Transverse colon (tissue), 4 donors: ENCODE measurements at regions of chr9 and their contacts with region 1.

Region 1: GRCh38 chr9:130780865-130781504 is 54.1 kb upstream of the ABL1 start:
- DNase-seq: peak; percentile 55
- H3K4me3 ChIP-seq: peak overlapping the region in 1 of 4 donors; percentile 24
- H3K27ac ChIP-seq: peak overlapping the region; percentile 82 to 95 (median 90)
- H3K4me1 ChIP-seq: peaks cover 19 to 37% (median 35%) of the 10 kb centered on the region in 4 donors
- H3K27me3 ChIP-seq: no peaks in the 10 kb centered on the region
- CTCF ChIP-seq: no peak
- EP300 ChIP-seq: peak; percentile 97
- POLR2A ChIP-seq: peak; percentile 64

Region 2: GRCh38 chr9:130847327-130848217 is 66.6 kb after region 1 on chr9:
- in situ Hi-C with region 1: no loop called
- intact Hi-C with region 1: loop called (anchors 5 kb)
- DNase-seq: peak; percentile 59
- H3K4me3 ChIP-seq: no peak overlapping the region
- H3K27ac ChIP-seq: peak overlapping the region; percentile 94 to 99 (median 97)
- H3K4me1 ChIP-seq: peaks cover 11 to 90% (median 51%) of the 10 kb centered on the region in 4 donors
- H3K27me3 ChIP-seq: no peaks in the 10 kb centered on the region
- CTCF ChIP-seq: no peak
- EP300 ChIP-seq: peak; percentile 72
- POLR2A ChIP-seq: no peak

Region 3: GRCh38 chr9:130877300-130877699 is 96.3 kb after region 1 on chr9:
- in situ Hi-C with region 1: no loop called
- intact Hi-C with region 1: no loop called
- DNase-seq: no peak
- H3K4me3 ChIP-seq: no peak overlapping the region
- H3K27ac ChIP-seq: no peak overlapping the region
- H3K4me1 ChIP-seq: peaks cover 11 to 18% (median 15%) of the 10 kb centered on the region in 4 donors
- H3K27me3 ChIP-seq: no peaks in the 10 kb centered on the region
- CTCF ChIP-seq: no peak
- EP300 ChIP-seq: no peak
- POLR2A ChIP-seq: no peak

Region 4: GRCh38 chr9:131046581-131047202 is 265.7 kb after region 1 on chr9:
- in situ Hi-C with region 1: no loop called
- intact Hi-C with region 1: no loop called
- DNase-seq: peak; percentile 62
- H3K4me3 ChIP-seq: no peak overlapping the region
- H3K27ac ChIP-seq: no peak overlapping the region
- H3K4me1 ChIP-seq: peaks cover 0 to 5% (median 2%) of the 10 kb centered on the region in 4 donors
- H3K27me3 ChIP-seq: peaks cover 12% of the 10 kb centered on the region
- CTCF ChIP-seq: peak; percentile 80 to 92 (median 87)
- EP300 ChIP-seq: no peak
- POLR2A ChIP-seq: no peak